ENCODE measurements at regions of chr2 and their contacts with region 1.

Region 1: DNA sequence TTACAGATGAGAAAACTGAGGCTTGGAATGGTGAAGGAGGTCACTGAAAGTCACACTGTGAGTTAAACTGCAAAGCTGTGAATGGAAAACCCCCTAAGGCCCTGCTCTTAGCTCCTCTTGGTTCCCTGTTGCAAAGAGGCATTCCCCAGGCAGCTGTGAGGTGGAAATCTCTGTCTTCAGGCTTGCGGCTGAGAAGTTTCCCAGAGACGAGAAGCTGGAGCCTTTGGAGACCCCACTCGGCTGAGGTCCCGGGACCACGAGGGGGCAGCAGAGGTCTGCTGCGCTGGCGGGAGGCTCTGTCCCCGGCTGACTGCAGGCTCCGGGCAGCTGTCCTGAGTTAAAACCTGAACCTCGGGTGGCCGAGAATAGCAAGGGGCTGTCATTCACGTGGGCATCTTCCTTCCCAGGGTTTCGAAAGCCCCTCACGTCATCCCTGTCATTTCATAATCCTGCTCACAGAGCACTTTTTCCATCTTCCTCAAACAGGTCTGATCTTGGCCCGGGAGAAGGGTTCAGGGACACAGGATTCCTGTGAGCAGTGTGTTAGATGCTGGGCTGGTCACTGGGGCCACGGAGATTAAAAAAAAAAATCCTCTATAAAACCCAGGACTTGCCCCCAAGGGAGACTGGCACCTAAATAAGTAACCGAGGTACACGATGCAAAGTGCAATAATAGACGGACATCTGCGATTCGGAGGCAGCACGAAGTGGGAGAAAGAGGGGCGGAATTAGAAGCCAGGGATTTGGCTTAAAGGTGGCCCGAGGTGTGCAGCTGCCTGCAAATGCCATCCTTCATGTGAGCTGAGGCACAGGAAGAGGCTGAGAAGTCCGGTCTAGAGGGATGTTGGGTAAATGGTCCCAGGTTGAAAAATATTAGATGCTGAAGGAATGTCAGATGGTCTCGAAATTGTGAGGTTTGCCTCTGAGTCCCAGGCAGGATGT is 24.6 kb upstream of the ATOH8 start:
- DNase-seq: peak; percentile 94
- H3K4me3 ChIP-seq: no peak overlapping the region
- H3K27ac ChIP-seq: peak overlapping the region in 2 of 4 donors; percentile 20 to 39
- H3K4me1 ChIP-seq: peaks cover 0 to 13% (median 10%) of the 10 kb centered on the region in 4 donors
- H3K27me3 ChIP-seq: no peaks in the 10 kb centered on the region
- CTCF ChIP-seq: peak; percentile 81 to 97 (median 91)
- EP300 ChIP-seq: peak in 1 of 4 donors; percentile 44
- POLR2A ChIP-seq: no peak

Region 2: DNA sequence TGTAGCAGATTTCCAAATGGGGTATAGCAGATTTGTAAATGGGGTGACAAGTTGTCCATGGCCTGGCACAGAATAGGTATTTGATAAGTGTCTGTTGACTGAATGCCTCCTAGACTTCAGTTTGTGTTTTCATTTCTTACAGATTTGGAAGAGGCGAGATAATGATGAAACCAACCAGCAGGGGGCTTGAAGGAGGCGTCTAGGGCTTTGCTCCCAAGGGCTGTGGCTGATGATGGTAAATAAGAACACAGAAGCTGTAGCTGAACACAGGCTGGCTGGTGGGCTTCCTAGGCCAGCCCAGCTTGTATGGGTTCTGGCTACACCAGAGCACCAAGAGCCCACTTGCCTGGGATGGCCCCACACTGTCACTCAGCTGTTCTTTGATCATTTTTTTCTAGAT is 80.5 kb before region 1 on chr2:
- intact Hi-C with region 1: no loop called
- DNase-seq: no peak
- H3K4me3 ChIP-seq: no peak overlapping the region
- H3K27ac ChIP-seq: no peak overlapping the region
- H3K4me1 ChIP-seq: no peaks in the 10 kb centered on the region
- H3K27me3 ChIP-seq: no peaks in the 10 kb centered on the region
- CTCF ChIP-seq: peak in 1 of 4 experiments; percentile 9
- EP300 ChIP-seq: no peak
- POLR2A ChIP-seq: no peak

Region 3: GRCh38 chr2:85813982-85814801 is 85.0 kb after region 1 on chr2:
- intact Hi-C with region 1: loop called (anchors 1 kb)
- DNase-seq: peak; percentile 94
- H3K4me3 ChIP-seq: no peak overlapping the region
- H3K27ac ChIP-seq: no peak overlapping the region
- H3K4me1 ChIP-seq: peaks cover 0 to 18% (median 15%) of the 10 kb centered on the region in 4 donors
- H3K27me3 ChIP-seq: no peaks in the 10 kb centered on the region
- CTCF ChIP-seq: peak; percentile 93 to 95 (median 94)
- EP300 ChIP-seq: no peak
- POLR2A ChIP-seq: no peak

Region 4: DNA sequence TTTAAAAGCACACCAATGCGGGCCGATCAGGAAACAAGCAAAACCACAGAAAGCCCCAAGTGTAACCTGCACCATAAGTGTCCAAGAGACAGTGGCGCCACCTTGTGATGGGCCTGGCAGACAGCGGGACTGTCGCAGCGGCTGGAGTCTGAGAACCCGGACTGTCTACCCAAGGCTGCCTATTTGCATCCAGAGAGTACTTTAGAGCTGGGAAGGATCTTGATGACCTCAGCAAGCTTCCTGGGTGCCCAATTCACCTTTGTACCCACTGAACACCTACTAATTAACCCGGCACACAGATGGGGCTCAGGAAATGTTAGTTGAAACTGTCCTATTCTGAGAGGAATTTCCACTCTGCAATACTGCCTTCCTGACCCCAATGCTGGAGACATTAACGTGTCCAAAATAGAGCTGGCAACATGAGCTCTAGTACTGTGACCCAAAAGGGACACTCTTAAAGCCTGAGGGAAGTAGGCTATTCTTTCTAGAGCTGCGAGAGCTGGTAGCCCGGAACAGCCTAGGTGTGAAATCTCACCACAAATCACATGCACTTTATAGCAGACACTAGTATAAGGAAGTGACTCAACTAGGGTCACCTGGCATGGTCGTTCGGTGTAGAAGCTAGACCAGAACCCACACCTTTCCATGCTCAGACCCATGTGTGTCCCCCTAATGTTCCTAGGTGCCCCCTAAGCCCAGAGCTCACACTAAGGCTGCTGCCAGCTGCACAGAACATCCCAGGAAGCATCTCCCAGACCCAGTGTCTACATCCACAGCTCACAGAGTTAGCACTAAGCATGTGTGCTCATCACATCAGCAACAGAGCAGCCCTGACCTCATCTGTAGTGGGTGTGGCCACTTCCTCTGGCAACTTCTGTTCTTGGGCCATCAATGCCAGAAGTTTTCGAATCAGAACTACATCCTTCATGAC is 351.1 kb after region 1 on chr2:
- intact Hi-C with region 1: loop called (anchors 10 kb)
- DNase-seq: peak; percentile 87
- H3K4me3 ChIP-seq: no peak overlapping the region
- H3K27ac ChIP-seq: no peak overlapping the region
- H3K4me1 ChIP-seq: no peaks in the 10 kb centered on the region
- H3K27me3 ChIP-seq: no peaks in the 10 kb centered on the region
- CTCF ChIP-seq: peak; percentile 43 to 73 (median 60)
- EP300 ChIP-seq: no peak
- POLR2A ChIP-seq: no peak